ENCODE measurements at regions of chr1 and their contacts with region 1.

Region 1: GRCh38 chr1:104780470-104781078 is 1030.9 kb downstream of the AMY1C start:
- DNase-seq: no peak
- ATAC-seq: peak; percentile 63
- H3K4me3 ChIP-seq: no peak overlapping the region
- H3K27ac ChIP-seq: no peak overlapping the region
- H3K4me1 ChIP-seq: no peaks in the 10 kb centered on the region
- H3K27me3 ChIP-seq: no peaks in the 10 kb centered on the region
- CTCF ChIP-seq: peak; percentile 70 to 79 (median 79)
- EP300 ChIP-seq: no peak
- POLR2A ChIP-seq: no peak
- RAD21 ChIP-seq: peak; percentile 96

Region 2: DNA sequence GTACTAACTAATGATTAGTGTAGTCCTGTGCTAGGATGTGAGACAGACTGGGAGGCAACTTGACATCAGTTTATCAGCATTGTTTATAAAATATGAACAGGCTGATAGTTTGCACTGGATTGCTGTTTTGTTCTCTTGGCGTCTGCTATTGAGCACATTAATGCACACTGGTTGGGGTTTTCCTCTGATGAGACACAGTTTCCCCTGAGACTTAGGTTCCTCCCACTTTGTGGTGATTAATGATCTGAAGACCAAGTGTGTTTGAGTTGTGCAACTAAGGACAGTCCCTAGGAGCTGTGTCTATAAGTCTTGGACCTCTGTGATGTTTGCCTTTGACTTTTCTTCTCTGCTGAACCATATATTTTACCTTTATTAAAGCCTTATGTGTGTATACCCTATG is 15.5 kb before region 1 on chr1:
- CTCF ChIA-PET with region 1: interaction called, 25 read pairs
- POLR2A ChIA-PET with region 1: no interaction called
- RAD21 ChIA-PET with region 1: interaction called, 10 read pairs
- SMC1A ChIA-PET with region 1: interaction called, 12 read pairs
- in situ Hi-C with region 1: no loop called
- intact Hi-C with region 1: no loop called
- DNase-seq: peak; percentile 59
- ATAC-seq: peak; percentile 92
- H3K4me3 ChIP-seq: no peak overlapping the region
- H3K27ac ChIP-seq: no peak overlapping the region
- H3K4me1 ChIP-seq: peaks cover 4% of the 10 kb centered on the region
- H3K27me3 ChIP-seq: no peaks in the 10 kb centered on the region
- CTCF ChIP-seq: no peak
- EP300 ChIP-seq: no peak; a peak in 1 of 4 replicates
- POLR2A ChIP-seq: no peak
- RAD21 ChIP-seq: no peak

Region 3: DNA sequence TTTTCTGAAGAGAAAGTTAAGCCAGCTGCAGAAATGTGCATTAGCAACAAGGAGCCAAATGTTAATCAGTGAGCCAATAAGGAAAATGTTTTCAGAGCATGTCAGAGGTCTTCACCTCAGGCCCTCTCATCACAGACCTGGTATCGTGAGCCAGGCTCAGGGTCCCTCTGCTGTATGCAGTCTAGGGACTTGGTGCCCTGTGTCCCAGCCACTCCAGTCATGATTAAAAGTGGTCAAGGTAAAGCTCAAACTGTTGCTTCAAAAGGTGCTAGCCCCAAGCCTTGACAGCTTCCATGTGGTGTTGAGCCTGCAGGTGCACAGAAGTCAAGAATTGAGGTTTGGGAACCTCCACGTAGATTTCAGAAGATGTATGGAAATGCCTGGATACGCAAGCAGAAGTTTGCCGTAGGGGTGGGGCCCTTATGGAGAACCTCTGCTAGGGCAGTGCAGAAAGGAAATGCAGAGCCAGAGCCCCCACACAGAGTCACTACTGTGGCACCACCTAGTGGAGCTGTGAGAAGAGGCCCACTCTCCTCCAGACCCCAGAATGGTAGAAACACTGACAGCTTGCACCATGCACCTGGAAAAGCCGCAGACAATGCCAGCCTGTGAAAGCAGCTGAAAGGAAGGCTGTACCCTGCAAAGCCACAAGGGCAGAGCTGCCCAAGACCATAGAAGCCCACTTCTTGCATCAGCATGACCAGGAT is 97.8 kb after region 1 on chr1:
- CTCF ChIA-PET with region 1: interaction called, 4 read pairs
- POLR2A ChIA-PET with region 1: no interaction called
- RAD21 ChIA-PET with region 1: no interaction called
- SMC1A ChIA-PET with region 1: interaction called, 5 read pairs
- in situ Hi-C with region 1: no loop called
- intact Hi-C with region 1: loop called (anchors 1 kb)
- DNase-seq: no peak
- ATAC-seq: peak; percentile 82
- H3K4me3 ChIP-seq: no peak overlapping the region
- H3K27ac ChIP-seq: no peak overlapping the region
- H3K4me1 ChIP-seq: no peaks in the 10 kb centered on the region
- H3K27me3 ChIP-seq: no peaks in the 10 kb centered on the region
- CTCF ChIP-seq: peak; percentile 30 to 46 (median 34); a peak in 3 of 6 replicates
- EP300 ChIP-seq: no peak
- POLR2A ChIP-seq: no peak
- RAD21 ChIP-seq: peak; percentile 53

Region 4: GRCh38 chr1:104953555-104953954 is 173.0 kb after region 1 on chr1:
- CTCF ChIA-PET with region 1: no interaction called
- POLR2A ChIA-PET with region 1: no interaction called
- RAD21 ChIA-PET with region 1: no interaction called
- SMC1A ChIA-PET with region 1: no interaction called
- in situ Hi-C with region 1: no loop called
- intact Hi-C with region 1: no loop called
- DNase-seq: no peak
- ATAC-seq: no peak
- H3K4me3 ChIP-seq: no peak overlapping the region
- H3K27ac ChIP-seq: no peak overlapping the region
- H3K4me1 ChIP-seq: no peaks in the 10 kb centered on the region
- H3K27me3 ChIP-seq: no peaks in the 10 kb centered on the region
- CTCF ChIP-seq: no peak
- EP300 ChIP-seq: no peak
- POLR2A ChIP-seq: no peak
- RAD21 ChIP-seq: no peak

Region 5: GRCh38 chr1:105027838-105028471 is 247.4 kb after region 1 on chr1:
- CTCF ChIA-PET with region 1: interaction called, 49 read pairs
- POLR2A ChIA-PET with region 1: no interaction called
- RAD21 ChIA-PET with region 1: interaction called, 28 read pairs
- SMC1A ChIA-PET with region 1: interaction called, 38 read pairs
- in situ Hi-C with region 1: no loop called
- intact Hi-C with region 1: loop called (anchors 1 kb)
- DNase-seq: no peak
- ATAC-seq: peak; percentile 79
- H3K4me3 ChIP-seq: no peak overlapping the region
- H3K27ac ChIP-seq: no peak overlapping the region
- H3K4me1 ChIP-seq: no peaks in the 10 kb centered on the region
- H3K27me3 ChIP-seq: no peaks in the 10 kb centered on the region
- CTCF ChIP-seq: peak; percentile 34 to 48 (median 42); a peak in 4 of 6 replicates
- EP300 ChIP-seq: no peak
- POLR2A ChIP-seq: no peak
- RAD21 ChIP-seq: peak; percentile 80

Region 6: DNA sequence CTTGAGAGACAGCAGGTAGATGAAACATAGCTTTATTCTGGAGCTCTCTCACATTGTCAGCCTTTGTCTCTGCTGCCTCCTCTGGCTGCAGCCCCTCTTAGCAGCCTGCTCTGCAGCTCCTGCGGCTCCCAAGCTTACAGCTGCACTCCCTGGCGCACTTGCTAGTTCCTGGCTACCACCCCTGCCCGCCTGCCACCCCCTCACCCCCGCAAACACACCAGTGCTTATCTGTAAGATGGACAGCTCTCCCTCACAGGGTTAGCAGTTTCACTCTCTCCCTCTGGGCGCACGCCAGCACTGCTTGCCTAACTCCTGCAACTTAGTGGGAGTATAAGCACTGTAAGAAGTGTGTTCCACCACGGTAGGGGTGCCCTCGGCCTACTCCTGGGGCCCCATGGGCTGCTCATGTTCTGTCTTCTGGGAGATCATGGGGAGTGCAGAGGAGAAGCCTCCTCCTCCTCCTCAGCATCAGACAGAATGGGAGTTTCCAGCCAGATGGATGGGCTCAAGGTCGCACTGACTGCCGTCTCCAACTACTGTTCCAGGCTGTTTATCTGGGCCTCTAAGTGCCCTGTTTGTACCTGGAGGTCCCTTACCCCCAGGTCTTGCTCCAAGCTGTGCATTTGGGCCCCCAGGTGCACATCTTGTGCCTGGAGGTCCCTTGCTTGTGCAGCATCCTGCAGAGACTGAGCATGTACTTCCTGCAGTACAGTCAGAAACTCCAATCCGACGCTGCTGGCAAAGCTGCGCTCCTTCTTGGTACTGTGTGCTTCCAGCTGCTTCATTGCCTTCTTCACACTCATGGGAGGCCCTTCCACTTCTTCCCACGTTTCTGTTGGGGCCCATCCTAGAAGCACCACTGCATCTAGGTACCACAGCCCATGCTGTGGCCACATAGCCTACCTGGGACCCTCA is 357.2 kb after region 1 on chr1:
- CTCF ChIA-PET with region 1: interaction called, 5 read pairs
- POLR2A ChIA-PET with region 1: no interaction called
- RAD21 ChIA-PET with region 1: interaction called, 6 read pairs
- SMC1A ChIA-PET with region 1: no interaction called
- in situ Hi-C with region 1: no loop called
- intact Hi-C with region 1: loop called (anchors 5 kb)
- DNase-seq: no peak
- ATAC-seq: peak; percentile 93
- H3K4me3 ChIP-seq: no peak overlapping the region
- H3K27ac ChIP-seq: no peak overlapping the region
- H3K4me1 ChIP-seq: no peaks in the 10 kb centered on the region
- H3K27me3 ChIP-seq: no peaks in the 10 kb centered on the region
- CTCF ChIP-seq: peak; percentile 22 to 54 (median 52); a peak in 5 of 6 replicates
- EP300 ChIP-seq: no peak
- POLR2A ChIP-seq: no peak
- RAD21 ChIP-seq: peak; percentile 41

Region 7: DNA sequence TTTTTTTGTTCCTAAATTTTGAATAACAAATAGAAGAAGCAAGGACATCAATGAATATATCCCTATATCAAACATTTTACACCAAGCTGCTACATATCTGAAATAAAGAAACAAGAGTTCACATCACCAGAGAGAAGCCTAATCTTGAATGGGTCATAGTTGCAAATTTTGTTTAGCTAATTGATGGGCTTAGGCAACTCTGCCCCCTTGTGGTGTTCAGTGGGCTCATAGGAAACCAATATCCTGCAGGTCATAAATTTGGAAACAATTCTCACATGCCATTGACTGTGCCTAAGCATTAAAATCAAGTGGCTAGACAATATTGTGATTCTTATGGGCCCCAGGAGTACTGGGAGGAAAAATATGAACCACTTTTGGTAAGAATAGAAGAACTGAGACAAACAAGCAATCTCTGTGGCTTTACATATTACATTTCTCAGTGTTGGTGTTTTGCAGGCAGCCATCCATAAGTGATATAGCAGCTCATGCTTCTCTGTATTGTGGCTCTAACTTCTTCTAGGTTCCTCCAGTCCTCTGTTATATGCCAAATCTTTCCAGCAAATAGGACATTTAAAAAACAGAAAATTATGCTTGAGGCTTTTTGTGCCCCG is 1013.1 kb after region 1 on chr1:
- CTCF ChIA-PET with region 1: interaction called, 5 read pairs
- POLR2A ChIA-PET with region 1: no interaction called
- RAD21 ChIA-PET with region 1: interaction called, 5 read pairs
- SMC1A ChIA-PET with region 1: interaction called, 3 read pairs
- in situ Hi-C with region 1: loop called (anchors 10 kb)
- intact Hi-C with region 1: loop called (anchors 2 kb)
- DNase-seq: no peak
- ATAC-seq: peak; percentile 74
- H3K4me3 ChIP-seq: no peak overlapping the region
- H3K27ac ChIP-seq: no peak overlapping the region
- H3K4me1 ChIP-seq: no peaks in the 10 kb centered on the region
- H3K27me3 ChIP-seq: no peaks in the 10 kb centered on the region
- CTCF ChIP-seq: peak; percentile 63 to 70 (median 64)
- EP300 ChIP-seq: no peak
- POLR2A ChIP-seq: no peak
- RAD21 ChIP-seq: peak; percentile 73

Measured in GM12878 (cell line).